PC-9 (cell line): ENCODE measurements at regions of chr9 and their contacts with region 1.

Region 1: GRCh38 chr9:82934952-82935351 is 128.0 kb downstream of the RASEF start:
- DNase-seq: peak; percentile 59 to 94
- H3K4me3 ChIP-seq: no peak overlapping the region
- H3K27ac ChIP-seq: peak overlapping the region; percentile 42
- H3K4me1 ChIP-seq: peaks cover 28% of the 10 kb centered on the region
- H3K27me3 ChIP-seq: no peaks in the 10 kb centered on the region
- CTCF ChIP-seq: no peak

Region 2: DNA sequence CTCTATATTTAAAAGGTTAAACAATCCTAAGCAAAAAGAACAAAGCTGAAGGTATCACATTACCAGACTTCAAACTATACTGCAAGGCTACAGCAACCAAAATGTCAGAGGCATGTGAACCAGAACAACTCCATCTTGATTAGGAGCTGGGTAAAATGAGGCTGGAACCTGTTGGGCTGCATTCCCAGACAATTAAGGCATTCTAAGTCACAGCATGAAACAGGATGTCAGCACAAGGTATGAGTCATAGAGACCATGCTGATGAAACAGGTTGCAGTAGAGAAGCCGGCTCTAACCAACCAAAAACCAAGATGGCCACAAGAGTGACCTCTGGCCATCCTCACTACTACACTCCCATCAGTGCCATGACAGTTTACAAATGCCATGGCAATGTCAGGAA is 124.0 kb before region 1 on chr9:
- CTCF ChIA-PET with region 1: no interaction called
- POLR2A ChIA-PET with region 1: no interaction called
- intact Hi-C with region 1: loop called (anchors 5 kb)
- DNase-seq: peak; percentile 75 to 82
- H3K4me3 ChIP-seq: no peak overlapping the region
- H3K27ac ChIP-seq: peak overlapping the region; percentile 71
- H3K4me1 ChIP-seq: peaks cover 12% of the 10 kb centered on the region
- H3K27me3 ChIP-seq: no peaks in the 10 kb centered on the region
- CTCF ChIP-seq: no peak

Region 3: DNA sequence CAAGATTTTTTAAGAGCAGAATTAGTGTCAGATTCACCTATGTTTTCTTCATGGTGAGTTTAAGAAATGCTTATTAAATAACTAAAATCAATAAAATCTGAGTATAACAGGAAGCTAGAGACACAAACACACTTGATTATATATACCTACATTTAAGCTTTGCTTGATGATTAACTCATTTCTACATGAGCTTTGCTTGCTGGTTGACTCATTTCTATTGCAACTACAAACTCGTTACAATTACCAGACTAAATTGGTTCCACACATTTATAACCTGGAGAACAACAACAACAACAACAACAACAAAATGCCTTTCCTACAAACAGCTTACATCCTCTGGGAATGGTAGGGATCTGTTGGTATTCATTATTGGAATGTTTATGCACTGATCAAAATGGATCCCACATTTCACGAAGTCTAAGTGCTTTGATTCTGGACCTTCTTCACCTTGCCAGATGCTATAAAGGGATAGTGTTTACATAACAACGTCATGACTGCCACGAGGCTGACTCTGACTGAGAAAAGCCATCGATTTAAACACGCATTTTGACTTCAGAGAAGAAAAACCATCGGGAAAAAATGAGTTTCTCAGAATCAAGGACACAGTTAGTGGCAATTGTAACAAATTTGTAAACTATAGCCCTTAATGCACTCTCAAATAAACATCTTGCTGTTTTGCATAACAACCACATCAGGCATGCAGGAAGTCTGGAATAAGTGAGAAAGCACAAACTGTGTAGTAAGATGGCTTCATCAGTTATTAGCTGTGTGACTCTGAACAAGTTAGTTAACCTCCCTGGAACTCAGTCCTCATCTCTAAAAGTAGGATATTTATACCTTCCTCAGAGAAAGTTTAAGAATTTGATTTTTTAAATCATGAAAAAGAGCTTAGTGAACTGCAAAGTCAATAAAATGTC is 78.2 kb after region 1 on chr9:
- CTCF ChIA-PET with region 1: no interaction called
- POLR2A ChIA-PET with region 1: interaction called, 21 read pairs
- intact Hi-C with region 1: no loop called
- DNase-seq: no peak
- H3K4me3 ChIP-seq: no peak overlapping the region
- H3K27ac ChIP-seq: no peak overlapping the region
- H3K4me1 ChIP-seq: no peaks in the 10 kb centered on the region
- H3K27me3 ChIP-seq: no peaks in the 10 kb centered on the region
- CTCF ChIP-seq: no peak

Region 4: GRCh38 chr9:83106263-83106662 is 171.3 kb after region 1 on chr9:
- CTCF ChIA-PET with region 1: no interaction called
- POLR2A ChIA-PET with region 1: interaction called, 15 read pairs
- intact Hi-C with region 1: no loop called
- DNase-seq: no peak
- H3K4me3 ChIP-seq: no peak overlapping the region
- H3K27ac ChIP-seq: no peak overlapping the region
- H3K4me1 ChIP-seq: no peaks in the 10 kb centered on the region
- H3K27me3 ChIP-seq: no peaks in the 10 kb centered on the region
- CTCF ChIP-seq: no peak